Motor neuron (in vitro differentiated cells): ENCODE measurements at regions of chr17 and their contacts with region 1.

Region 1: DNA sequence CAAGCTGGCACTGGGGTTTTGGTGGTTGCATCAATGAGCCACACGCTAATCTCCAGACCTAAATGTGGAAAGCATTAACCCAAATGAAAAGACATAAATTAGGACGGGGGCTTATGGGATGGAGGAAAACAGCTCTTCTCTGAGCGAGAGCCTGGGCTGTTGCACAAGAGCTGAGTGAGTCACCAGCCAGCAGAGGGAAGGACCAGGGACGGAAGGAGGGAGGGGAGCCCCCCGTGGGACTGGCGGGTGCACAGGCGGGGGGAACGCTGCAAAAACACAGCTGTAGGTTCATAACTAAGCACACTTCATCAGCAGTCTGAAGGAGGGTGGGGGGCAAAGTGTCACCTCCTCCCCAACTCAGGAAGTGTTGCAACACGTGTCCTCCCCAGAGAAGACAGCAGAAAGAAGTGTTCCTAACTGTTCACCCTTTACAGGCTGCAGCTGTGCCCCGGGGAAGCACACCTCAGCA is 83.3 kb downstream of the GAS7 start:
- ATAC-seq: peak; percentile 89 to 97 (median 96)
- H3K4me3 ChIP-seq: no peak overlapping the region
- H3K27ac ChIP-seq: peak overlapping the region in 1 of 2 donors; percentile 67
- H3K4me1 ChIP-seq: peaks cover 27 to 28% of the 10 kb centered on the region in 2 donors

Region 2: DNA sequence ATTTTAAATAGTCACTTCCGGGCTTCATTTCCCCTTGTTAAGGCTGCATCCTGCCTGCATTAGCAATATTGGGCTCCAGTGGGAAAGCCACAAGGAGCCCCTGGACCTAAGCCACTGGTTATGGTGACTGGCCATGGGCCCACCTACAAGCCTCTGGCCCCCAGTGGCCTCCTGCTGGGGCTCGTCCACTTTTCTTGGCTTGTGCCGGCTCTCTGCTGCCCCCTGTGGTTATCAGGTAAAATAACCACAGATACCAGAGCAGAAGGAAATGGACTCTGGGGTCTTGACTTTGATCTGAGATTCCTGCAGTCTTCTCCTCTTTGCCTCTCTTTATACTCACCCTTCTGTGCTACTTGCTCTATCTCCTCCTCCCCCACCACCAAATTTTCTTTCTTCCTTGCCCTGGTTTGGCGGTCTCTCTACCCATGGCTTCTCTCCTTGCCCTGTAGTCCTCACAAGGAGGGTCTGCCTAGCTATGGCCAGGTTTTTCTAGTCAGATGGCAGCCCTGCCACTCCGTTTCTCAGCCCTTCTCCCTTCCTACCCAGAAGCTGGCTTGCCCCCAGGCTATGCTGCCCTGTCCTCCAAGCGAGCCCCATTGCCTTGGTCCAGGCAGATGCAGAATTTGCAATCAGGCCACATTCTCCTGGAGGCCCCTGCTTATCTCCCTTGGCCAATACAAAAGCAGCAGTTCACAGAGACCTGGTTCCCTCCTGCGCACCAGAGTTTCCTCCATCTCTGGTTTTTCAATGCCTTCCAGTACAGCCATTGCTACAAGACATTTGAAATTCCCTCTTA is 127.1 kb before region 1 on chr17:
- in situ Hi-C with region 1: loop called in 1 of 9 experiments (anchors 25 kb)
- ATAC-seq: peak in 4 of 8 experiments; percentile 26 to 72 (median 44)
- H3K4me3 ChIP-seq: no peak overlapping the region
- H3K27ac ChIP-seq: no peak overlapping the region
- H3K4me1 ChIP-seq: no peaks in the 10 kb centered on the region

Region 3: DNA sequence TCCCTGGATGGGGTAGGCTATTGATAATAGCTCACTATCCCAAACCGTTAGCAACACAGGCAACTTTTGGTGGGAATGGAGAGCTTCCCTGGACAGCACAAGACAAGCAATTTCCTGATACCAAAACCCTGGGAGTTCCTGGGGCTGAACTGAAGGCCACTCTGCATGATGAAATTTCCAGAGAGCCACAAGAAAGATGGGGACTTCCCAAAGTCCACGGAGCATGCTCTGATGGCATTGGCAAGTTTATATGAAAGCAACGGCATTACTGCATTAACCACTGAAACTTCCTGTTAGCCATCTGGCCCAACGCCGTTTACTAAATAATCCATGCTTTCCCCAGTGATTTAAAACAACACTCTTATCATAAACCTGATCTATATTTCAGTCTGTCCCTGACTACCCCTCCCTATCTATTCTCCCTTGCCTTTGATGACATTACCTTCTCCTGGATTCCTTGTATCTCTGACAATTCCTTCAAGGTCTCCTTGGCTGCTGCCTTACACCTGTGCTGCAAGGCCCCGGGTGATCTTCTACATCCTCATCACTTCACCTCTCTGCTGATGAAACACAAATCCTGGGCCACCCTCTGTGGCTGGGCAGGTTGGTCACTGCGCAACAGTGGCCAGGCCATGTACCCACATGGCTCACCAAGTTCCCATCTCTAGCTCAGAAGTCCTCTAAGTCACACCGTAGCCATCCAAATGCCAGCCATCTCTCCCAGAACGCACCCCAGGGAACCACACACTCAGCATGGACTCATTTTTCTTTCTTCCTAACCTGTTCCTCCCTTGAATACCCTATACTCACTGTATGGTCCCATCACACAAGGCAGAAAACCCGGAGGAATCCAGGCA is 101.5 kb before region 1 on chr17:
- in situ Hi-C with region 1: no loop called
- ATAC-seq: peak in 2 of 8 experiments; percentile 29 to 42
- H3K4me3 ChIP-seq: no peak overlapping the region
- H3K27ac ChIP-seq: no peak overlapping the region
- H3K4me1 ChIP-seq: peaks cover 5 to 9% of the 10 kb centered on the region in 2 donors

Region 4: GRCh38 chr17:10384175-10384574 is 269.1 kb after region 1 on chr17:
- in situ Hi-C with region 1: no loop called
- ATAC-seq: peak in 3 of 8 experiments; percentile 29 to 69 (median 57)
- H3K4me3 ChIP-seq: no peak overlapping the region
- H3K27ac ChIP-seq: no peak overlapping the region
- H3K4me1 ChIP-seq: no peaks in the 10 kb centered on the region